ENCODE measurements at regions of chr1 and their contacts with region 1.

Region 1: GRCh38 chr1:28736450-28737306 is at the start of gene YTHDF2:
- DNase-seq: peak; percentile 99
- ATAC-seq: peak; percentile 98
- H3K4me3 ChIP-seq: peak within 1 kb of the TSS; percentile 96
- H3K27ac ChIP-seq: peak within 1 kb of the TSS; percentile 96
- H3K4me1 ChIP-seq: peaks cover 31% of the 10 kb centered on the region
- H3K27me3 ChIP-seq: no peaks in the 10 kb centered on the region
- CTCF ChIP-seq: peak; percentile 95
- total RNA-seq, gene YTHDF2: 65.8 TPM

Region 2: GRCh38 chr1:28602536-28603439 is 133.9 kb before region 1 on chr1:
- intact Hi-C with region 1: no loop called
- DNase-seq: no peak
- ATAC-seq: peak; percentile 81
- H3K4me3 ChIP-seq: no peak overlapping the region
- H3K27ac ChIP-seq: no peak overlapping the region
- H3K4me1 ChIP-seq: no peaks in the 10 kb centered on the region
- H3K27me3 ChIP-seq: no peaks in the 10 kb centered on the region
- CTCF ChIP-seq: peak; percentile 61

Region 3: GRCh38 chr1:28642847-28643635 is 93.6 kb before region 1 on chr1 and contains the start of gene TAF12:
- intact Hi-C with region 1: loop called (anchors 10 kb)
- DNase-seq: peak; percentile 95
- ATAC-seq: peak; percentile 96
- H3K4me3 ChIP-seq: peak within 1 kb of the TSS; percentile 81
- H3K27ac ChIP-seq: peak within 1 kb of the TSS; percentile 85
- H3K4me1 ChIP-seq: peaks cover 28% of the 10 kb centered on the region
- H3K27me3 ChIP-seq: no peaks in the 10 kb centered on the region
- CTCF ChIP-seq: peak; percentile 50
- total RNA-seq, gene TAF12: 21.0 TPM

Measured in upper lobe of right lung (tissue), 1 donor.